ENCODE measurements at regions of chr17 and their contacts with region 1.

Region 1: GRCh38 chr17:9071921-9072498 is 50.7 kb downstream of the NTN1 start:
- DNase-seq: no peak
- H3K4me3 ChIP-seq: no peak overlapping the region
- H3K27ac ChIP-seq: no peak overlapping the region
- H3K4me1 ChIP-seq: no peaks in the 10 kb centered on the region
- H3K27me3 ChIP-seq: no peaks in the 10 kb centered on the region

Region 2: DNA sequence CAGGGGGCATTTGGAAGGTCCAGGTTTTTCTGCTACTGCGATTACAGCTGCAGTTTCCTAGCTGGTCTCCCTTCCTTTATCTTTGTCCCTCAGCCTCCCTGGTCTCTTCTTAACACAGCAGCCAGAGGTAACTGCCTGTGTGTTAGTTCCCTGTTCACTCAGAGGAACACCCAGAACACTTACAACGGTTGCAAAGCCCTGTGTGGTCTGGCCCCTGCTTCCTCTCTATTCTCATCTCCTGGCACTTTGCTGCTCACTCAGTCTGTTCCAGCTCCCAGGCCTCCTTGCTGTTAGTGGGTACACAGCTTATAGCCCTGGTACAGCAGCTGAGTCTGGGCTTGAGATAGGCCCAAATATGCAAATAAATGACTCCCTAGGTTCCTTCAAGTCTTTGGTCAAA is 34.3 kb before region 1 on chr17:
- CTCF ChIA-PET with region 1: no interaction called
- POLR2A ChIA-PET with region 1: no interaction called
- DNase-seq: peak in 2 of 3 donors; percentile 50 to 68
- H3K4me3 ChIP-seq: peak overlapping the region in 1 of 7 experiments; percentile 0
- H3K27ac ChIP-seq: peak overlapping the region; percentile 6 to 35
- H3K4me1 ChIP-seq: peaks cover 0 to 24% (median 8%) of the 10 kb centered on the region in 4 experiments
- H3K27me3 ChIP-seq: no peaks in the 10 kb centered on the region

Region 3: GRCh38 chr17:9150446-9151090 is 78.6 kb after region 1 on chr17:
- CTCF ChIA-PET with region 1: no interaction called
- POLR2A ChIA-PET with region 1: no interaction called
- DNase-seq: no peak
- H3K4me3 ChIP-seq: no peak overlapping the region
- H3K27ac ChIP-seq: no peak overlapping the region
- H3K4me1 ChIP-seq: no peaks in the 10 kb centered on the region
- H3K27me3 ChIP-seq: peaks cover 0 to 10% (median 0%) of the 10 kb centered on the region in 5 experiments

Region 4: GRCh38 chr17:9222631-9223030 is 150.6 kb after region 1 on chr17:
- CTCF ChIA-PET with region 1: no interaction called
- POLR2A ChIA-PET with region 1: interaction called, 10 read pairs
- DNase-seq: no peak
- H3K4me3 ChIP-seq: no peak overlapping the region
- H3K27ac ChIP-seq: no peak overlapping the region
- H3K4me1 ChIP-seq: no peaks in the 10 kb centered on the region
- H3K27me3 ChIP-seq: no peaks in the 10 kb centered on the region